Motor neuron (in vitro differentiated cells): ENCODE measurements at regions of chr2 and their contacts with region 1.

Region 1: DNA sequence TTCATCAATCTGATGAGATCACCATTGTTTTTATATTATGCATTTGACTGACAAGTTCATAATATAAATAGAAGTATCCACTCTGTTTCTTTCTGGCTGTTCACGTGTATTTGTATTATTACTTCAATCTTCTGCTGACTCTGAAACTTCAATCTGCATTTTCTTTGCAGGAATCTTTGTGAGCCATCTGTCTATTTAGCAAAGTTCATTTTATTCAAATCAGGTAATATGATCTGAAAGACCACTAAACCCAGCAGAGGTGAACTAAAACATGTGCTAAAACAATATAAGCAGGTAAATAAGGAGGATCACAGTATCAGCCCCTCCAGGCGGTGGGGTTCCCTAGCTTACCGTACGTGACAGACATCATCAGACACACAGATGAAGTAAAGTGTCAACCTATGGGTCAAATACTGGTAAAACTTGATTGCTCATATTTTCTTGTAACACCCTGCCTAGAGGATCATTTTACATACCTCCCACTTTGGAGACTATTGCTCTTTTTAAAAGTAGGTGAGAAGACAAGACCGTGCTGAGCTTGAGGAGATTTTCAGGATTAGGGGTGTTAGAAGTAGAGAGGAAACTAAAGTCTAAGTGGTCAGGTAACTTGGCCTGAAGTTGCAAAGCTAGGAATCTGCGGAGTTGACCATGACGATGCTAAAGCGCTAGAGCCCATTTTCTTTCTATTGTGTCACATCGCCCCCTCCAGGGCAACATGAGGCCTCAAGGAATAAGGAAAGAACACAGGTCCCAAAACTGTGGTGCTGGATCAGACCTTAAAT is 9.0 kb downstream of the DTNB start:
- ATAC-seq: peak in 4 of 8 experiments; percentile 60 to 97 (median 90)
- H3K4me3 ChIP-seq: no peak overlapping the region
- H3K27ac ChIP-seq: no peak overlapping the region
- H3K4me1 ChIP-seq: no peaks in the 10 kb centered on the region

Region 2: DNA sequence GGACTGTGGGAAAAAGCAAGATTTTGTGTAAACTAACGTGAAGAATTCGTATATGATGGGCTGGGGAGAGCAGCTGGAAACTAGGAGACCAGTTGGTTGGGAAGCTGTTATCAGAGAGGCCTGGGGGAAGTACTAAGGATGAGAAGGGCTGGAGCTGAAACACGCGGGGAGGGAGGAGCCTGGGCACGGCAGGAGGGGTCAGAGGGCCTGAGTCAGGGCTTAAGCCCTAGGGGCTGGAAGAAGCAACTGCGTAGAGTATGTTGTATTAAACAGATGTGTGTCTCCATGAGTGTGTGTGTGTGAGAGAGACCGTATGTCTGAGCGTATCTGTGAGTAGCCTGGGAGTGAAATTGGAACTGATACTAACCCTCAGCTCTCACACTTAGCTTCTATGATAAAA is 504.4 kb before region 1 on chr2:
- in situ Hi-C with region 1: no loop called
- ATAC-seq: peak in 3 of 8 experiments; percentile 20 to 76 (median 50)
- H3K4me3 ChIP-seq: no peak overlapping the region
- H3K27ac ChIP-seq: no peak overlapping the region
- H3K4me1 ChIP-seq: no peaks in the 10 kb centered on the region

Region 3: GRCh38 chr2:25618642-25619037 is 45.7 kb before region 1 on chr2:
- in situ Hi-C with region 1: loop called in 1 of 9 experiments (anchors 10 kb)
- ATAC-seq: peak in 5 of 8 experiments; percentile 65 to 97 (median 85)
- H3K4me3 ChIP-seq: no peak overlapping the region
- H3K27ac ChIP-seq: no peak overlapping the region
- H3K4me1 ChIP-seq: peaks cover 0 to 2% of the 10 kb centered on the region in 2 donors